ENCODE measurements at regions of chr19 and their contacts with region 1.

Region 1: DNA sequence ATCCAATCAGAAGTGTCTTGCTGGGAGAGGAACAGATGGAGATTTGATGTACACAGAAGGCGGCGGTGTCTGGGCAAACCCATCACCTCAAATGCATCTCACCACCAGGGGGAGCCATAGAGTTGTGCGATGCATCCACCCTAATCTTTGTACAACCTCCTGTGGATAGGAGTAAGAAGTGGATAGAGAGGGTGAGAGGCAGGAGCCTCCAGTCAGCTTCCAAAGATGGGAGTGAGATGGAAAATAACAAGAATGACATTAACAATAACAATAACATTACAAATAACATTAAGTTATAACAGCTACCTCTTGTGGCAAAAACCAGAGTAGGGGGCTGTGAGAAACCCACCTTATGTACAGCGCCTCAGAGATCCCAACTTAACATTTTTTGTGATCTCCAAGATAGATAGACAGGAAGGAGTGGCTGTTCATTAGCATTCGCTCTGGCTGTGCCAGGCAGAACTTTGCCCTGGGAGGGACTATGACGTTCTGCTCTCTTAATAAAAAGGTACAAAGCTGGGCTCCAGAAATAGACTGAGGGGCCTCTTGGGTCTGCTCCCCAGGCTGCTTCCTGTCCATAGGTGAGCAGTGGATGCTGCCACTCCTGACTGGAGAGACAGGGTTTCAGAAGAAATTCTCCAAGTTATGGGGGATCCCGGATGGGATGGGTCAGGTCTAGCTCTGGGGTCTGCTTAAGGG is 5.2 kb upstream of the CEACAM18 start:
- DNase-seq: peak; percentile 76 to 84
- ATAC-seq: peak; percentile 67
- H3K4me3 ChIP-seq: no peak overlapping the region
- H3K27ac ChIP-seq: no peak overlapping the region
- H3K4me1 ChIP-seq: no peaks in the 10 kb centered on the region
- H3K27me3 ChIP-seq: no peaks in the 10 kb centered on the region

Region 2: DNA sequence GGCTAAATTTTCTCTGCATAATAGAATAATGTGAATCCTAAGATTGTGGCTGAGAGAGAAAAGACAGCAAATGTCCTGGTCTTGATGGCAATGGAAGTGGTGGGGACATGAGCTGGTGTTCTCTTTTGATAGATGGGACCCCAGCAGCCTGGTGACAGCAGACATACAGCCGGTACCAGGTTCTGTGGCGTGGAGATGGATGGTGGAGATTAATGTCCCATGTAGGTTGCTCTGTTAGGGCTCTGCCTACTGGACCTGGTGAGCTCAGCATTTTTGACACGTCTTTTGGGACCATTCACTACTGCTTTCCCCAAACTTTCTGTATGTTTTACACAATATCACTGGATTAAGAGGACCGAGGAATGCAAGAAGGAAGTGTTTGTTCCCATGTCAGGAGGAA is 181.6 kb after region 1 on chr19:
- intact Hi-C with region 1: loop called (anchors 2 to 5 kb)
- DNase-seq: no peak
- ATAC-seq: no peak
- H3K4me3 ChIP-seq: no peak overlapping the region
- H3K27ac ChIP-seq: no peak overlapping the region
- H3K4me1 ChIP-seq: no peaks in the 10 kb centered on the region
- H3K27me3 ChIP-seq: peaks cover 0 to 1% of the 10 kb centered on the region in 2 donors

Region 3: GRCh38 chr19:51660975-51661600 is 187.9 kb after region 1 on chr19:
- intact Hi-C with region 1: loop called (anchors 2 to 5 kb)
- DNase-seq: peak; percentile 86
- ATAC-seq: no peak
- H3K4me3 ChIP-seq: no peak overlapping the region
- H3K27ac ChIP-seq: no peak overlapping the region
- H3K4me1 ChIP-seq: no peaks in the 10 kb centered on the region
- H3K27me3 ChIP-seq: peaks cover 0 to 2% of the 10 kb centered on the region in 2 donors

Region 4: DNA sequence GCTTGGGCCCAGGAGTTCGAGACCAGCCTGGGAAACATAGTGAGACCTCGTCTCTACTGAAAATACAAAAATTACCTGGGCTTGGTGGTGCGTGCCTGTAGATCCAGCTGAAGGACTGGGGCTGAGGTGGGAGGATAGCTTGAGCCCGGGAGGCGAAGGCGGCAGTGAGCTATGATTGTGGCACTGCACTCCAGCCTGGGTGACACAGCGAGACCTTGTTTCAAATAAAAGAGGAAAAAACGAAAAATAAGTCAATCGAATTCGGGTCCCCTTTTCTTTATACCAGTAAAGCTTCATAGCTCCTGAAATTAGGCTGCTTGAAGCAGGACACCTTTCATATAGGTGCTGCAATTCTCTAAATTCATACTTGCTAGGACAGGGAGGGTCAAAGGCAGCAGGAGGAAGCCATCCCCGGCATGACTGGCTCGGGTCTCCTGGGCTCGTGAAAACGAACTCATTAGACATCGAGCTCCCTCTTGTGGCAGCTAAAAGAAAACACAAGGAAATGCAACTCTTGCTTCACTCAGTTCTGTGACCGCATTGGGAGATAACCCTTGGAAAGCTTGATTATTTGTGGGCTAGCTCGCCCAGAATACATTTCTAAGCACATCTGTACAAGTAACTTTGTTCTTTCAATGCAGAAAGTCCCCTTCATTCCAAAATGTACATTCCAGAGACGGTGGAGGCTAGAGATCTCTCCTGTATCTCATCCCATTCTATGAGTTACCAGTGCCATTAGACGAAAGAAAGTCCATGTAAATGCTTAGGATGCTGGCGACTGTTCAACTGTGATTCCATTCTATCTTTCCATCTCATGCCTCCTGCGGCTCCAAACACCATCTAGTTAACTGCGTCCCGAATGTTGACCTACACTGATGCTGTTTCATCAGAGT is 304.7 kb after region 1 on chr19:
- intact Hi-C with region 1: loop called in 1 of 2 experiments (anchors 2 kb)
- DNase-seq: peak; percentile 77 to 80
- ATAC-seq: peak; percentile 85
- H3K4me3 ChIP-seq: no peak overlapping the region
- H3K27ac ChIP-seq: no peak overlapping the region
- H3K4me1 ChIP-seq: no peaks in the 10 kb centered on the region
- H3K27me3 ChIP-seq: no peaks in the 10 kb centered on the region

Measured in aorta (tissue), 5 donors.